ENCODE measurements at regions of chr1 and their contacts with region 1.

Region 1: GRCh38 chr1:184075055-184076029 is 23.8 kb downstream of the TSEN15 start:
- DNase-seq: no peak
- H3K4me3 ChIP-seq: no peak overlapping the region
- H3K27ac ChIP-seq: peak overlapping the region in 3 of 4 donors; percentile 4 to 57 (median 48)
- H3K4me1 ChIP-seq: peaks cover 0 to 20% (median 0%) of the 10 kb centered on the region in 3 donors
- H3K27me3 ChIP-seq: no peaks in the 10 kb centered on the region
- CTCF ChIP-seq: peak; percentile 34 to 81 (median 66)
- POLR2A ChIP-seq: no peak

Region 2: DNA sequence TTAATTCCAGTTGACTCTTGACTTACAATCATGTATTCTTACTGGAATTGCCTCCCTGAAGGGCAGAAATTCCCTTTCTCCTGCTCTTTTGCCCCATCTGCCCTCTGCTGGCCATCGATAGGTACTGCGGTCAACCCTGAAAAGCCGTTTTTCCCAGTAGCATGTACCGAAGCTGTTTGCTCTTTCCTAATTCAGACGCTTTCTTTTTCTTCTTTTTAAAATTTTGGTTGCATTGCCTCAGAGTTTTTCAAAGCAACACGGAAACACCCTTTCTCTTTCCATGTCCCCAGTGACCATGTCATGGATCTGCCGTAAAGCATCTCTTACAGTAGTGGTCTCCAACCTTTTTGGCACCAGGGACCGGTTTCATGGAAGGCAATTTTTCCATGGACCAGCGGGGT is 147.3 kb after region 1 on chr1:
- intact Hi-C with region 1: loop called (anchors 5 kb)
- DNase-seq: no peak
- H3K4me3 ChIP-seq: peak overlapping the region in 2 of 4 donors; percentile 2 to 22
- H3K27ac ChIP-seq: no peak overlapping the region
- H3K4me1 ChIP-seq: peaks cover 0 to 5% (median 0%) of the 10 kb centered on the region in 3 donors
- H3K27me3 ChIP-seq: peaks cover 0 to 4% (median 0%) of the 10 kb centered on the region in 4 donors
- CTCF ChIP-seq: peak; percentile 47 to 98 (median 90)
- POLR2A ChIP-seq: no peak

Region 3: GRCh38 chr1:184664042-184664655 is 588.8 kb after region 1 on chr1:
- intact Hi-C with region 1: loop called (anchors 10 kb)
- DNase-seq: no peak
- H3K4me3 ChIP-seq: peak overlapping the region; percentile 13 to 58 (median 28)
- H3K27ac ChIP-seq: peak overlapping the region in 1 of 4 donors; percentile 17
- H3K4me1 ChIP-seq: peaks cover 6 to 14% (median 7%) of the 10 kb centered on the region in 3 donors
- H3K27me3 ChIP-seq: peaks cover 0 to 9% (median 0%) of the 10 kb centered on the region in 4 donors
- CTCF ChIP-seq: peak; percentile 66 to 88 (median 82)
- POLR2A ChIP-seq: no peak